Activated B cell treated with CpG ODN at 0.5 μM for 24 hours (primary cell): ENCODE measurements at regions of chr1 and their contacts with region 1.

Region 1: GRCh38 chr1:45303582-45304310 is 22.9 kb upstream of the HPDL start:
- DNase-seq: peak; percentile 91
- ATAC-seq: peak; percentile 80
- H3K4me3 Mint-ChIP-seq: peak overlapping the region; percentile 92
- H3K27ac Mint-ChIP-seq: peak overlapping the region; percentile 96
- H3K4me1 Mint-ChIP-seq: peaks cover 43% of the 10 kb centered on the region
- H3K27me3 Mint-ChIP-seq: no peaks in the 10 kb centered on the region
- CTCF ChIP-seq: no peak

Region 2: DNA sequence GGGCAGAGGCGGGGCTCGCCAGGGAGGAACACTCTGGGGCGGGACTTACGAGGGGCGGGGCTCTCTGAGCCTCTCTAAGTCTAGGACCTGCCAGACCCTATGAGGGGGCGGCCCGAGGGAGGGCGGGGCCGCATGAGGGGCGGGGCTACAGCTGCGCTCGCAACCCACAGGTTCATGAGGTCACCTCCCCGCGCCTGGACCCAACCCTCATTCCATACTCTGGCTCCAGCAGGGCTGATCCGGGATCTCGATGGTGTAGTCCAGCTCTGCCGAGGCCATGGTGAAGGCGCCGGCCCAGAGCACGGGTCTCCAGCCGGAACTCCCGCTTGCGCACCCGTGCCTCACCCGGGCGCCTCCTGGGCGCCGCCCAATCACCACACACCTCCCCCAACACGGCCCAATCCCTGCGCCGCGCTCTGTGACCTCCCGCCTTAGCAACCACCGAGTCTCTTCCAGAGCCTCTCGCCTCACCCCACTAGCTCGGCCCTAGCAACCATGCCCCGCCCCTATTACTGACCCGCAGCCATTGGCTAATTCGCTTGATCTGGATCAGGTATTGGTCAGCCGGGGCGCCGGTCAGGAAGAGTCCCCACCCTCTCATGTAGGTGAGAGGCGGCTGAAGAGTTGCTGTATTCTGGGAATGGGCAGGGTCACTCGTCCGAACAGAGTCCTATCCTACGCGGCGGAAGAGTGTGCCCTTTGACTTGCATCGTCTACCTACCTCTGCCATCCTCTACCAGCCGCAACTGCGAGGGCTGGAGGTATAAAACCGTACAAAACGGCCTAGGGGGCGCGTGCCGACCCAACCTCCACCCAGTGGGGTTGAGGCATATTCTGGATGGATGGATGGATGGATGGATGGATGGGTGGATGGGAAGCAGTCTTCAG is 629.4 kb before region 1 on chr1 and contains the starts of genes ARMH1 and TMEM53:
- CTCF ChIA-PET with region 1: no interaction called
- POLR2A ChIA-PET with region 1: interaction called, 9 read pairs
- intact Hi-C with region 1: loop called (anchors 1 kb)
- DNase-seq: peak; percentile 98
- ATAC-seq: peak; percentile 90
- H3K4me3 Mint-ChIP-seq: peak within 1 kb of the TSS; percentile 87
- H3K27ac Mint-ChIP-seq: peak within 1 kb of the TSS; percentile 93
- H3K4me1 Mint-ChIP-seq: peaks cover 32% of the 10 kb centered on the region
- H3K27me3 Mint-ChIP-seq: no peaks in the 10 kb centered on the region
- CTCF ChIP-seq: no peak
- total RNA-seq, gene ARMH1: 18.1 and 19.9 TPM in 2 replicates
- total RNA-seq, gene TMEM53: 4.6 and 4.8 TPM in 2 replicates

Region 3: DNA sequence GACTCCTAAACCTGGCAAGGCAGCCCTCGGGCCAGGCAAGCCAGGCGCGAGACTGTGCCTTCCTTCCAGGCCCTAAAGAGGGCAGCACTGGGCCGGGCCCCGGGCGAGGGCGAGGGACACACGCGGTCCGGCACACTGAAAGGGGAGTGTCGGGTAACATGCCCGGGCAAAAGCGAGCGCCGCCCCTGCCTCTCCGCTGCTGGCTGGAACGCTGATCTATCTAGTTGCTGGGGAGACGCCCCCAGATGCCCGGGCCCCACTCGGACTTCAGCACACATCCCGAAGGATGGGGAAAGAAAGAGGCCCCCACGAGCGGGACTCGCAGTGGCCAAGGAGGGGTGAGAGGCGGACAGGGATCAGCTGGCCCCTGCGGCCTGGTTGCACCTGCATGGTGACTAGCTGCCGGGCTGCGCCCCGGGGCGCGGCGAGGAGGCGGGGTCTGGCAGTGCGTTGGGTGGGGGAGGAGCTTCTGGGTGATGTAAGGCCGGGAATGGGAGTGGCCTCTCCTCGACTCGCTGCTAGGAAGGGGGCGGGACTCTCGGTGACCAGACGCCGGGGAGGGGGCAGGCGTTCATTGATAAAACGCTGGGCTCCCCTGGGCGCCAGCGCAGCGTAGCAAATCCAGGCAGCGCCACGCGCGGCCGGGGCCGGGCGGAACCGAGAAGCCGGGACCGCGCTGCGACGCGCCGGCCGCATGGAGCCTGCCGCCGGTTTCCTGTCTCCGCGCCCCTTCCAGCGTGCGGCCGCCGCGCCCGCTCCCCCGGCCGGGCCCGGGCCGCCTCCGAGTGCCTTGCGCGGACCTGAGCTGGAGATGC is 503.8 kb before region 1 on chr1 and contains the start of gene PLK3:
- CTCF ChIA-PET with region 1: interaction called, 6 read pairs
- POLR2A ChIA-PET with region 1: interaction called, 16 read pairs
- intact Hi-C with region 1: loop called (anchors 1 kb)
- DNase-seq: peak; percentile 94
- ATAC-seq: peak; percentile 88
- H3K4me3 Mint-ChIP-seq: peak within 1 kb of the TSS; percentile 97
- H3K27ac Mint-ChIP-seq: peak within 1 kb of the TSS; percentile 100
- H3K4me1 Mint-ChIP-seq: peaks cover 33% of the 10 kb centered on the region
- H3K27me3 Mint-ChIP-seq: no peaks in the 10 kb centered on the region
- CTCF ChIP-seq: peak; percentile 30
- total RNA-seq, gene PLK3: 63.0 and 82.0 TPM in 2 replicates

Region 4: GRCh38 chr1:44835738-44836675 is 467.7 kb before region 1 on chr1:
- CTCF ChIA-PET with region 1: interaction called, 5 read pairs
- POLR2A ChIA-PET with region 1: no interaction called
- intact Hi-C with region 1: loop called (anchors 1 kb)
- DNase-seq: peak; percentile 75
- ATAC-seq: peak; percentile 99
- H3K4me3 Mint-ChIP-seq: no peak overlapping the region
- H3K27ac Mint-ChIP-seq: peak overlapping the region; percentile 47
- H3K4me1 Mint-ChIP-seq: peaks cover 13% of the 10 kb centered on the region
- H3K27me3 Mint-ChIP-seq: no peaks in the 10 kb centered on the region
- CTCF ChIP-seq: peak; percentile 71

Region 5: GRCh38 chr1:45205910-45206721 is 97.6 kb before region 1 on chr1 and contains the start of gene ZSWIM5:
- CTCF ChIA-PET with region 1: no interaction called
- POLR2A ChIA-PET with region 1: no interaction called
- intact Hi-C with region 1: loop called (anchors 5 kb)
- DNase-seq: peak; percentile 64
- ATAC-seq: peak; percentile 79
- H3K4me3 Mint-ChIP-seq: peak within 1 kb of the TSS; percentile 84
- H3K27ac Mint-ChIP-seq: peak within 1 kb of the TSS; percentile 33
- H3K4me1 Mint-ChIP-seq: peaks cover 13% of the 10 kb centered on the region
- H3K27me3 Mint-ChIP-seq: peaks cover 22% of the 10 kb centered on the region
- CTCF ChIP-seq: no peak
- total RNA-seq, gene ZSWIM5: 1.6 and 2.3 TPM in 2 replicates

Region 6: DNA sequence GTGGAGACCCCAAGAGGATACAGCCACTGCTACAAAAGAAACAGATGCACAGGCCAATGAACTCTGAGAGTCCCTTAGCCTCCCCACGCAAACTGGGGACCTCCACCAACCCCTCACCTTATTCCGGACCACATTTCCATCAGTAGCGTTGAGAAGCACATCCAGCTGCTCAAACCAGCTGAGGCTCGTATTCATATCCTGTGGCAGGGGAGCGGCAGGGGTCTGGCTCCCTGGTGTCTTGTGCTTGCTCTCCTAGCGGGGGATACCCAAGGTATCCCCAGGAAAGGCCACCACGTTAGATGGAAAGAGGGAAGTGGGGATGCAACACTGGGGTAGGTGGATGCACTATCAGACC is 195.6 kb after region 1 on chr1:
- CTCF ChIA-PET with region 1: interaction called, 3 read pairs
- POLR2A ChIA-PET with region 1: interaction called, 20 read pairs
- intact Hi-C with region 1: no loop called
- DNase-seq: no peak
- ATAC-seq: no peak
- H3K4me3 Mint-ChIP-seq: peak overlapping the region; percentile 97
- H3K27ac Mint-ChIP-seq: peak overlapping the region; percentile 88
- H3K4me1 Mint-ChIP-seq: peaks cover 27% of the 10 kb centered on the region
- H3K27me3 Mint-ChIP-seq: no peaks in the 10 kb centered on the region
- CTCF ChIP-seq: no peak

Region 7: GRCh38 chr1:45686317-45687013 is 382.7 kb after region 1 on chr1 and contains the start of gene GPBP1L1:
- CTCF ChIA-PET with region 1: no interaction called
- POLR2A ChIA-PET with region 1: interaction called, 8 read pairs
- intact Hi-C with region 1: loop called (anchors 1 kb)
- DNase-seq: peak; percentile 98
- ATAC-seq: peak; percentile 73
- H3K4me3 Mint-ChIP-seq: peak within 1 kb of the TSS; percentile 99
- H3K27ac Mint-ChIP-seq: peak within 1 kb of the TSS; percentile 100
- H3K4me1 Mint-ChIP-seq: peaks cover 53% of the 10 kb centered on the region
- H3K27me3 Mint-ChIP-seq: no peaks in the 10 kb centered on the region
- CTCF ChIP-seq: no peak
- total RNA-seq, gene GPBP1L1: 133 and 138 TPM in 2 replicates